ENCODE measurements at regions of chrX and their contacts with region 1.

Region 1: DNA sequence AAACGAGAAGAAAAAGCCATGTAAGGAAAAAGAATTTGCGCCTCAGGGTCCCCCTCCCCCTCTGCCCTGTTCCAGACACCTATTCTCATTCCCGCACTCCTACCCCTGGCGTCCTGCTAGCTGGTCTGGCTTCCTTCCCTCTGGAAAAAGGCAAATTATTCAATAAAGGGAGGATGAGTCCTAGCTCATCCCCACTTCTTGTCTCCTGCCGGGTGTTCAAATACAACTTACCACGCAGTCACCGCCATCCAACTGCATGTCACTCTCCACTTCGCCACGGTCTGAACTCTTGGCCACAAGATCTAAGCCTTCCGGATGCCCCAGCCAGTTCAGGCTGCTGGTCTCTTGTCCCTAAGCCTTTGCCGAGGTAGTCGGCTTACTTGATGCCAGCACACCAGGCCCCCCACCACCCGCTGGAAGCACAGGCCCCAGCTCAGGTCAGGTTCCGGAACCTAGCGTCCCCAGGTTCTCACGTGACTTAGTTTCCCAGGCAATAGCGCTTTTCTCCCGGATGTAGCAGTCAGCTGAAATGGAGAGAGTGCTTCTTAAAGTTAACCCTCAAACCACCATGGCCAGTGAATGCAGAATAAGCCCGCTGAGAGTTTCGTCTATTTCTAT is 209.6 kb upstream of the SPIN4 start:
- DNase-seq: peak; percentile 31
- H3K4me3 Mint-ChIP-seq: peak overlapping the region; percentile 97
- H3K27ac Mint-ChIP-seq: peak overlapping the region; percentile 73
- H3K4me1 Mint-ChIP-seq: peaks cover 9% of the 10 kb centered on the region
- H3K27me3 Mint-ChIP-seq: no peaks in the 10 kb centered on the region

Region 2: GRCh38 chrX:63350941-63351616 is 209.6 kb before region 1 on chrX and contains the start of gene SPIN4:
- intact Hi-C with region 1: loop called (anchors 2 kb)
- DNase-seq: peak; percentile 54
- H3K4me3 Mint-ChIP-seq: peak within 1 kb of the TSS; percentile 93
- H3K27ac Mint-ChIP-seq: peak within 1 kb of the TSS; percentile 81
- H3K4me1 Mint-ChIP-seq: peaks cover 27% of the 10 kb centered on the region
- H3K27me3 Mint-ChIP-seq: peaks cover 2% of the 10 kb centered on the region
- total RNA-seq, gene SPIN4: 4.4 and 4.5 TPM in 2 replicates